ENCODE measurements at regions of chr15 and their contacts with region 1.

Region 1: GRCh38 chr15:72155635-72156616 is 37.7 kb downstream of the SENP8 start:
- DNase-seq: peak; percentile 90
- H3K4me3 Mint-ChIP-seq: peak overlapping the region; percentile 46
- H3K27ac Mint-ChIP-seq: no peak overlapping the region
- H3K4me1 Mint-ChIP-seq: peaks cover 6% of the 10 kb centered on the region
- H3K27me3 Mint-ChIP-seq: no peaks in the 10 kb centered on the region

Region 2: GRCh38 chr15:71743861-71744382 is 412.0 kb before region 1 on chr15:
- CTCF ChIA-PET with region 1: interaction called, 55 read pairs
- POLR2A ChIA-PET with region 1: no interaction called
- intact Hi-C with region 1: loop called (anchors 1 kb)
- DNase-seq: peak; percentile 58
- H3K4me3 Mint-ChIP-seq: no peak overlapping the region
- H3K27ac Mint-ChIP-seq: no peak overlapping the region
- H3K4me1 Mint-ChIP-seq: no peaks in the 10 kb centered on the region
- H3K27me3 Mint-ChIP-seq: peaks cover 6% of the 10 kb centered on the region

Region 3: GRCh38 chr15:71752604-71753289 is 403.2 kb before region 1 on chr15:
- CTCF ChIA-PET with region 1: interaction called, 13 read pairs
- POLR2A ChIA-PET with region 1: no interaction called
- intact Hi-C with region 1: no loop called
- DNase-seq: peak; percentile 23
- H3K4me3 Mint-ChIP-seq: no peak overlapping the region
- H3K27ac Mint-ChIP-seq: no peak overlapping the region
- H3K4me1 Mint-ChIP-seq: no peaks in the 10 kb centered on the region
- H3K27me3 Mint-ChIP-seq: no peaks in the 10 kb centered on the region

Region 4: DNA sequence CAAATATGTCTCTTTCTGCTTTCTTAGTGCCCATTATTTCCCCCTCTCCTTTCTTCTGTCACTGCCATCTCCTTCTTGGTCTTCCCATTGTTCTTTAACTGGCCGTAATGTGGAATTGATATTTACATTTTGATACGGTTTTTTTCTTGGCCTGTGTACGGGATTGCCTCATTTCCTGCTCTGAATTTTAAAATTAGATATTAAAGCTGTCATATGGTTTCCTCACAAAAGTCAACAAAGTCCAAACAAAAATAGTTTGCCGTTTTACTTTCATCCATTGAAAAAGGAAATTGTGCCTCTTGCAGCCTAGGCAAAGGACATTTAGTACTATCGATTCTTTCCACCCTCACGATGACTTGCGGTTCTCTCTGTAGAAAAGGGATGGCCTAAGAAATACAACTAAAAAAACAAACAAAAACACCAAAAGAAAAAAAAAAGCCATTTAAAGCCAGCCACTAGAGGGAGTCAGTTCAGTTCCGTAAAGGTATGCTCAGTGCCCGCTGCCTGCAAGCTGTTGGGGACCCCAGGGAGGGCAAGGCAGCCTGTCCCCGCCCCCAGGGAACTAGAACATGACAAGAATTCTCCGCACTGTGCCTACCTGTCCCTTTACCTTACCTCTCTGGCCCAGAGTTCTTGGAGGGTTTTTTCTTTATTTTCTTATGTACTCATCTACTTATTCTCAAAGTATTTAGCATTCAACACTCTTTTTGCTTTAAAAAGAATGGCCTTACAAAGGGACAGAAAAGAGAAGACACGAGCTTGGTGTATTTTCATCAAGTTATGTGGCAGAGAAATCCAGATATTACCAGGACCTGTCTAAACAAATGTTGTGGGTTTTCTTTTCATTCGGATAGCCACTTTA is 375.6 kb before region 1 on chr15:
- CTCF ChIA-PET with region 1: interaction called, 44 read pairs
- POLR2A ChIA-PET with region 1: no interaction called
- intact Hi-C with region 1: loop called (anchors 1 kb)
- DNase-seq: peak; percentile 40
- H3K4me3 Mint-ChIP-seq: no peak overlapping the region
- H3K27ac Mint-ChIP-seq: no peak overlapping the region
- H3K4me1 Mint-ChIP-seq: peaks cover 15% of the 10 kb centered on the region
- H3K27me3 Mint-ChIP-seq: peaks cover 25% of the 10 kb centered on the region

Region 5: DNA sequence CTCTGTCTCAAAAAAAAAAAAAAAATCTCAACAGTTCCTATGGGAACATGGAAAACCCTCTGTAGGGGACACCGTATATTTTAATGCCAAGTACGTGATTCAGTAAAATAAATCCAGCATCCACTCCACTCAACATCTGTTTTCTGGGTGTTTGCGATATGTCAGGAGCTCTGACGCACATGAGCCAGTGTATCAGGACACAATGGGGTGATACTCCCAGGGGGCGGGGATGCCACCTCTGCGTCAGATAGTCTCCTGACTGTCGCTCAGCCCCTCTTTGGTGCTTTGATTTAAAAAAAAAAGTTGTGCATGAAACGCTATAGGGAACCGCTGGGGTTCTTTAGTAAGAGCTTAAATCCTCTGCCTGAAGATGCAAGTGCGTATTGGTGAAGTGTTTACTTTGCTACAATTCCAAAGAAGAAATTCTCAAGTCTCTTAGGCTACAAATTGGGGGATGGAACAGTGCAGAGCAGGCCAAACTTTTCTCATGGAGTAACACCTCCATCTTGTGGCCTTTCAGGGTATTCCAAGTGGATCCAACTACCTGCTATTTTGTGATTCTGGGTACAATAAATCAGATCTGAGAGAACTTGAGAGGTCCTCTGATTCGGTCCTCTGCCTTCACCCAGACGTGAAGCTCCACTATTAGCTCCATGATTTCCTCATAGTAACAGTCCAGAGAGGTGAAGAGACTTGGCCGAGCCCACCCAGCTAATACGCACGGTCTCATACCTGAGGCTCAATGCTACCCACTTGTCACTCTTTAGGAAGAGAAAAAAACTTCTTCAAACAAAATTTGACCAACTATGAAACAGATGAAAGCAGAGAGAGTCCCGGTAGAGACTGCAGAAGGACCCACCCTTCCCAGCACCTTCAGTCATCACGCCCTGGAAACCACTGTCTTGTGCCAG is 354.8 kb before region 1 on chr15:
- CTCF ChIA-PET with region 1: interaction called, 22 read pairs
- POLR2A ChIA-PET with region 1: no interaction called
- intact Hi-C with region 1: loop called (anchors 1 kb)
- DNase-seq: peak; percentile 33
- H3K4me3 Mint-ChIP-seq: no peak overlapping the region
- H3K27ac Mint-ChIP-seq: no peak overlapping the region
- H3K4me1 Mint-ChIP-seq: no peaks in the 10 kb centered on the region
- H3K27me3 Mint-ChIP-seq: peaks cover 14% of the 10 kb centered on the region

Region 6: GRCh38 chr15:72141171-72142084 is 14.5 kb before region 1 on chr15:
- CTCF ChIA-PET with region 1: interaction called, 21 read pairs
- POLR2A ChIA-PET with region 1: no interaction called
- intact Hi-C with region 1: no loop called
- DNase-seq: no peak
- H3K4me3 Mint-ChIP-seq: no peak overlapping the region
- H3K27ac Mint-ChIP-seq: no peak overlapping the region
- H3K4me1 Mint-ChIP-seq: peaks cover 3% of the 10 kb centered on the region
- H3K27me3 Mint-ChIP-seq: no peaks in the 10 kb centered on the region